Dendritic cell treated with granulocyte-macrophage colony-stimulating factor and Interleukin-4, amounts not matched to agents 40 ng/mL and 50 ng/mL, for 4 days (primary cell): ENCODE measurements at regions of chr21 and their contacts with region 1.

Region 1: DNA sequence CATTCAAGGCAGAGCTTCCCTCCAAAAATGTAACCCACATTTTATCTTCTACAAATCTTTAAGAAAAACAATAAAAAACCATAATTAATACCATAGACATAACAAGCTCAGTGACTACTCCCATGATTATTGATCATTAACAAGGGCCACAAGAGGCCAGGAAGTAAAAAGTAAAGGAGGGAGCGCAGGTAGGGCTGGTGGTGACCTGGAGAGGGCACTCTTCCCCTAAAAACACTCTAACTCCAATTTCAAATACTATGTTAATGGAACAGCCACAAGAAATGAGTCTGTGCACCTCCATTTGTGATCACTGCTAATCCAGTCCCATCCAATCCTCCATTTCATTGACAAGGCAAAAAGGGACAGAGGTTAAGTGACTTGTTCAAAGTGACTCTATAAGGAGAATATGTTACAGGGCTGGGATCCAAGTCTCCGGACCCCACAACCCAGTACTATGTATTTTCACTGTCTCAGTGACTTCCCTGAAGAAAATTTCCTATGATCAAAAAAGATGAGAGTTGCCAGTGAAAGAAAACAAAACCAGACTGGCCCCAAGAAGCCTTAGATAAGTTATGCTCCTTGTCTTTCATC is 41.2 kb upstream of the CFAP298 start:
- H3K4me3 Mint-ChIP-seq: no peak overlapping the region
- H3K27ac Mint-ChIP-seq: no peak overlapping the region
- H3K4me1 Mint-ChIP-seq: no peaks in the 10 kb centered on the region
- H3K27me3 Mint-ChIP-seq: no peaks in the 10 kb centered on the region

Region 2: DNA sequence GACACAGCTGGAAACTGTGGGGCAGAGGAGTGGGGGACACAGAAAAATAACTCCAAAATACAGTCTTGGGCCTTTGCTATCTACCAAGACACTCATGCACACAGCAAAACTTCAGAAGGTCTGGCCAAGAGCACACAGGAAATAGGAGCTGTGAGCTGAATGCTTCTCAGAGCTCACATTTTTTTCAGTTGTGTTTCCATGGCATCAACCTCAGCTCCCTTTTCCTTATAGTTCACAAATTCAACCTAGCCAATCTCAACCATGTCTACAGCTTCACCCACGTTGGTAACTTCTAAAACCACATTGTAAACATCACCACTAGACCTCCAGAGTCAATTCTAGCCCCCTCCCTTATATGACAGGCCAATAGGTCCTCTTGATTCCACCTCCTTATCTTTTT is 94.0 kb after region 1 on chr21:
- intact Hi-C with region 1: loop called (anchors 10 kb)
- H3K4me3 Mint-ChIP-seq: no peak overlapping the region
- H3K27ac Mint-ChIP-seq: peak overlapping the region; percentile 52
- H3K4me1 Mint-ChIP-seq: peaks cover 7% of the 10 kb centered on the region
- H3K27me3 Mint-ChIP-seq: no peaks in the 10 kb centered on the region